ENCODE measurements at regions of chr1 and their contacts with region 1.

Region 1: DNA sequence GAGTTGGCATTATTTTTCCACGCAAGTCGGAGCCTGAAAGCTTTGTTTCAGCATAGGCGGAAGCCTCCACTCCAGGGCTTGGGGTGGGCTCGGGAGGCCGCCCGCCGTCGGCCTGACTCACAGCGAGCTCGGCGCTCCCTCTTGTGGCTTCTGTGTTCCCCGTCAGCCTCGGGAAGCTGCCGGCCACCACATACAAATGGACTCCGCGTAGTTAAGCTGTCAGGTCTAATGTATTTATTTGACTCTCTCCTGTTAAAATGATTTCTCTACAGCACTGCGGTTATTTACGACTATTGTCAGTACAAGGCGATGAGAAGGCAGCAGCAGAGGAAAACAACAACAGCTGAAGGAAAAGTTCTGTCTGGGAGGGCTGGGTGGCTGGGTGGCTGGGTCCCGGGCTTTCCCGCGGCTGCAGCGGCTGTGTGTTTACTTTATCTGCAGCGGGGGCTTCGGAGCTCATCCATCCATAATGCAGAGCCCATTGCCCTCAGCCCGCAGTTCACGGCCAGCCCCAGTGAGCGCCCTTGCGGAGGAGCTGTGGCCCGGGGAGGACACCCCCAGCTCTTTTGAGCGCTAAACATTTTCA is 375.7 kb upstream of the CAMK1G start:
- DNase-seq: peak; percentile 55
- H3K4me3 Mint-ChIP-seq: no peak overlapping the region
- H3K27ac Mint-ChIP-seq: no peak overlapping the region
- H3K4me1 Mint-ChIP-seq: no peaks in the 10 kb centered on the region
- H3K27me3 Mint-ChIP-seq: peaks cover 91% of the 10 kb centered on the region
- CTCF ChIP-seq: peak; percentile 58

Region 2: DNA sequence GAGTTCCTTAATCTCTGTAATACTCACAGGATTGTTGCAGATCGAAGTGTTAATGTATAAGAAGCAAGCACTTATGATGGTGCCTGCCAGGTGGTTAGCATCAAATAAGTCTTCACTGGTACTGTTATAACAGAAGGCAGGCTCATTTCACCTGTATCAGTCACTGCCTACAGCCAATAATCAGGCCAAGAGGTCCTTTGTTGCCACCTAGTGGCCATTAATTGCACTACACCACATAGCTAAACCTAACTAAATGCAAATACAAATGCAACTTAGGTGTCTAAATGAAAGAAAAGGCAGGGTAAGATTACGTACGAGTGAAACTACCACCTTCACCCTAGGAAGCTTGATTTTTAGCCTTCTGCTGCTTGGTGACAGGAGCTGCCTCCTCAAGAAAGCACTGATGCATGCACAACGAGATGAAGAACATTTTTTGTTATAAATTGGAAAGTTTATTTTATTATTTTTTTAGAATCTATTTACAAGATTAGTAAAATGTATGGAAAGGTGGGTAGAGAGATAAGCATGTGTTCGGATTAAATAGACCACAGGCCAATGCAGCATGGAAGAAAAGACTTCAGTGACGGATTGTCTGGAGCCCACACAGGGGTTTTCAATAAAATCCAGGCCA is 41.0 kb after region 1 on chr1:
- CTCF ChIA-PET with region 1: interaction called, 10 read pairs
- intact Hi-C with region 1: loop called (anchors 1 kb)
- DNase-seq: peak; percentile 79
- H3K4me3 Mint-ChIP-seq: no peak overlapping the region
- H3K27ac Mint-ChIP-seq: no peak overlapping the region
- H3K4me1 Mint-ChIP-seq: no peaks in the 10 kb centered on the region
- H3K27me3 Mint-ChIP-seq: peaks cover 42% of the 10 kb centered on the region
- CTCF ChIP-seq: peak; percentile 95

Region 3: DNA sequence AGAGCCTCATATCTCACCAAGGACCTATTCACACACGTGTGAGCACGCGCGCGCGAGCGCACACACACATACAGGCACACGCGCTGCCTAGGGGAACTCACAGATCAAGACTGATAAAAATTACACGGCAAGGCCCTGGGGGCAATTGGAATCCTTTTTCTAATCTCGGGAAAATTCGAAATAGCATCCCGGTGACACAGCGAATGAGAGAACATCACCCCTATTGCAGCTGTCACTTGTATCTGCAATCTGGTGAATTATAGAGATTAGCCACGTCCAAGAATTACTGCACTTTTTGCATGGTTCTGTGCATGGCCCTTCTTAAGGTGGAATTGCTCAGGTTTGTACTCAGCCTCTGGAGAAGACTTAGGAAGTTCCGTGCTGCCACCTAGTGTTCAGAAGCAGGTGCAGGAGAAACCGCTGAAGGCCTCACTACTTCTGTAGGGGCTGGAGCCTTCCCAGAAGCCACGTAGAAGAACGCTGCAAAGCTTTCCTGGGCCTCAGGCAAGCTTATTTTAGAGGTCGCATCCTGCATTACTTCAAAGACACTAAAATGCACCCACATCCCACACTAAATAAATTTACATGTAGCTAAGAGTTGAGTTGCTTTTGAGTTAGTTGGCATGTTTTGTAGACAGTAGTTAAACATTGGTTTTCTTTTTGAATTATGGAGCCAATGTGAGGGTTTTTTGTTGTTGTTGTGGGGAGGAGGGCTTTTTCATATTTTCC is 146.5 kb after region 1 on chr1:
- CTCF ChIA-PET with region 1: no interaction called
- intact Hi-C with region 1: loop called (anchors 1 kb)
- DNase-seq: peak; percentile 82
- H3K4me3 Mint-ChIP-seq: no peak overlapping the region
- H3K27ac Mint-ChIP-seq: no peak overlapping the region
- H3K4me1 Mint-ChIP-seq: peaks cover 7% of the 10 kb centered on the region
- H3K27me3 Mint-ChIP-seq: no peaks in the 10 kb centered on the region
- CTCF ChIP-seq: peak; percentile 84

Region 4: GRCh38 chr1:209435654-209436566 is 228.1 kb after region 1 on chr1:
- CTCF ChIA-PET with region 1: interaction called, 7 read pairs
- intact Hi-C with region 1: loop called (anchors 1 kb)
- DNase-seq: peak; percentile 94
- H3K4me3 Mint-ChIP-seq: no peak overlapping the region
- H3K27ac Mint-ChIP-seq: no peak overlapping the region
- H3K4me1 Mint-ChIP-seq: peaks cover 20% of the 10 kb centered on the region
- H3K27me3 Mint-ChIP-seq: peaks cover 17% of the 10 kb centered on the region
- CTCF ChIP-seq: peak; percentile 92

Region 5: DNA sequence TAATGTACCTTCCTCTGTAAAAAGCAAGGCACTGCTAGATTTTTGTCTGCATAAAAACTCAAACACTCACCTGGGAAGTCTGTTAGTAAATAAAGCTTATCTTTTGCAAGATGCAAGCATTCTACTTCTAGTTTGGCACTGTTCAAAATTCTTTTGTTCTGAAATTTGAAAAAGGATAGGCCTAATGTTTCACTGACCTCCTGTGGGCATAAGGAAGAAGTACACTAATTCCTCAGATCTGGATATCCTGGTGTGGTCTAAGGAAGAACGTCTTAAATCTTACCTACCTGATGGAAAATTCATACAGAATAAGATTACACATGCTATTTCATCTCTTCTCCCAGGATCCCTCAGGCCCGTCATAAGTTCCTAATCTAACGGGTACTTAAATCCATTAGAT is 282.2 kb after region 1 on chr1:
- CTCF ChIA-PET with region 1: no interaction called
- intact Hi-C with region 1: loop called (anchors 1 kb)
- DNase-seq: no peak
- H3K4me3 Mint-ChIP-seq: no peak overlapping the region
- H3K27ac Mint-ChIP-seq: no peak overlapping the region
- H3K4me1 Mint-ChIP-seq: no peaks in the 10 kb centered on the region
- H3K27me3 Mint-ChIP-seq: peaks cover 24% of the 10 kb centered on the region
- CTCF ChIP-seq: no peak

Region 6: DNA sequence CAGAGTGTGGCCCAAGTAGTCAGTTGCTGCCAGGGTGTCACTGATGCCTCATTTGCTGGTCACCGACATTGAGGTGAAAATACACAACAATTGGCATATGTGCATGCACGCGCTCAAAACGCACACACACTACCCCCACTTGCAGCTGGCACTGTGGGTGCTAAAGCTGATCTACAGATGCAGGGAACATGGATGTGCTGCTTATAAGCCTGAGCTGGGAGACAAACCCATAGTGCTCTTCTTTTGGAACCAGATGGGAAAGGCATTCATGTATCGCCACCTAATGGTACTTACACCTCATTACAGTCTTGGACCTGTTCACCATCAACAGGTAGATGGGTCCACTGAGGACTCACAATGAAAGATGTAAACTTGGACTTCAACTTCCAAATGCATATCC is 305.4 kb after region 1 on chr1:
- CTCF ChIA-PET with region 1: no interaction called
- intact Hi-C with region 1: loop called (anchors 2 kb)
- DNase-seq: peak; percentile 21
- H3K4me3 Mint-ChIP-seq: no peak overlapping the region
- H3K27ac Mint-ChIP-seq: no peak overlapping the region
- H3K4me1 Mint-ChIP-seq: no peaks in the 10 kb centered on the region
- H3K27me3 Mint-ChIP-seq: peaks cover 47% of the 10 kb centered on the region
- CTCF ChIP-seq: peak; percentile 62